ENCODE measurements at regions of chr18 and their contacts with region 1.

Region 1: DNA sequence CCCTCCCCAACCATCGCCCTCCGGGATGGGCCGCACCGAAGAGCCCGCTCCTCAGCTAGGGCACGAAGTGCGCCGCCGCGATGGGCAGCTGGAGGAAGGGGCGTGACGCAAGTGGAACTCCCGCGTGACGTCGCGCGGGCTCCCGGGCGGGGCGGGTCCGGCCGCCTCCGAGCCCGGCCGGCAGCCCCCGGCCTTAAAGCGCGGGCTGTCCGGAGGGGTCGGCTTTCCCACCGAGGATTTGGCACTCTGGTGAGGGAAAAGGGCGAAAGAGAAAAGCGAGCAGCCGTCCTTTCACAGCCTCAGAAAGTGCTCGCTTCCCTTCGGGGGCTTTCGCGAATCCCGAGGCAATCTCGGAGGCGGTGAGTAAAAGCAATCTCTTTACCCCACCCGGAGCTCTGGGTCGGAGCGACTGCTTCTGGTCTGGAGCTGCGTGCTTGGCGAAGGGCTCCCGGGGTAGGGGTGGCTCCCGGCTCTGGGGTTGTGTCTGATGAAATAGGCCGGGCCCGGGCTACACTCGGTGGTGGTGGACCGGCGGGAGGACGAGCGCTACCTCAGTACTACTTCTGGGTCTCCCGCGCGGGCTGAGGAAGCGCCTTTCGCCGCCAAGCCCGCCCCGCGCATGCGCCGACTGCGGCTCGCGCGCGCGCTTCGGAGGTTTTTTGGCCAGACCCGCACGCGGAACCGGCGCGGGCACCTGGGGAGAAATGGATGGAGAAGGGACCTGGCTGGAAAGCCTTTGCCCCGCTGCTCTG is at the start of gene RBBP8:
- DNase-seq: peak; percentile 87 to 90
- H3K4me3 ChIP-seq: peak within 1 kb of the TSS; percentile 51
- H3K4me3 Mint-ChIP-seq: peak within 1 kb of the TSS; percentile 92
- H3K27ac Mint-ChIP-seq: peak within 1 kb of the TSS; percentile 91
- H3K4me1 ChIP-seq: peaks cover 11% of the 10 kb centered on the region; the same call in 1 of the 2 replicates
- H3K4me1 Mint-ChIP-seq: peaks cover 17% of the 10 kb centered on the region
- H3K27me3 ChIP-seq: no peaks in the 10 kb centered on the region
- H3K27me3 Mint-ChIP-seq: no peaks in the 10 kb centered on the region
- CTCF ChIP-seq: no peak
- total RNA-seq, gene RBBP8: 44.4 and 46.7 TPM in 2 replicates

Region 2: DNA sequence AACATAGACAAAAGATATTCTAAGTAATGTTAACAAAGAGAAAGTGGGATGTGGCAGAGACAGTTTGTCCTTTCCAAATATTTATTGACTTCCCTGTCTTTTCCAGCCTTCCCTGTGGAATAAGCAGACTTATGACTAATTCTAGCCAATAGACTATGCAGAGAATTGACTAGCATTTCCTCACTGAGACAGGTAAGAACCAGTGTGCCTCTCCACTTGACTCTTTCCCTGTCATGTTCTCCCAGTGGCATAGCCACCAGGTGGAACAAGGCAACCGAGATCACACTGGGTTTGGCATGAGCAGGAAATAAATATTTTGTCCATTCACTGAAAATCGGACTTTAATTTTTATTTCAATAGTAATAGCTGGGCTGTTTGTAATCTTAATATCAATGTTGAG is 347.6 kb before region 1 on chr18:
- CTCF ChIA-PET with region 1: no interaction called
- POLR2A ChIA-PET with region 1: no interaction called
- intact Hi-C with region 1: no loop called
- DNase-seq: no peak
- H3K4me3 ChIP-seq: no peak overlapping the region
- H3K4me3 Mint-ChIP-seq: no peak overlapping the region
- H3K27ac Mint-ChIP-seq: no peak overlapping the region
- H3K4me1 ChIP-seq: no peaks in the 10 kb centered on the region
- H3K4me1 Mint-ChIP-seq: peaks cover 9% of the 10 kb centered on the region
- H3K27me3 ChIP-seq: no peaks in the 10 kb centered on the region
- H3K27me3 Mint-ChIP-seq: peaks cover 11% of the 10 kb centered on the region
- CTCF ChIP-seq: no peak

Region 3: DNA sequence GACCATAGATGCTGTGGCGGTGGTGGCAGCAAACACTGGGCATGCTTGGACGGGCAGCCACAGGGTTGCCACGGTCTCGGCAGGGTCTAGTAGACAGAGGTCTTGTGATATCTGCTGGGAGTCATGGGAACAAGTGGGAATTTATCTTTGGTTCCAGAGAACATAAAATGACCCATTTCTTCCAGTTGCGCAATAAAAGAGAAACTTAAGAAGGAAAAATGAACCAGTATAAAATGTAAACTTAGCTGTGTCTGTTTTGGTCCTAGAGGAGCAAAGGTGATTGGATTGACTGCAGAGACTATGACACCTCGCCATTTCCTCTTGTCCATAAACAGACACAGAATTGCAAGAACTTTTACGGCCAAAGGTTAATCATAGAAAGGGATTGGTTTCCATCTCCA is 132.8 kb before region 1 on chr18:
- CTCF ChIA-PET with region 1: no interaction called
- POLR2A ChIA-PET with region 1: no interaction called
- intact Hi-C with region 1: loop called (anchors 5 kb)
- DNase-seq: no peak
- H3K4me3 ChIP-seq: no peak overlapping the region
- H3K4me3 Mint-ChIP-seq: no peak overlapping the region
- H3K27ac Mint-ChIP-seq: no peak overlapping the region
- H3K4me1 ChIP-seq: no peaks in the 10 kb centered on the region
- H3K4me1 Mint-ChIP-seq: no peaks in the 10 kb centered on the region
- H3K27me3 ChIP-seq: no peaks in the 10 kb centered on the region
- H3K27me3 Mint-ChIP-seq: no peaks in the 10 kb centered on the region
- CTCF ChIP-seq: no peak

Region 4: GRCh38 chr18:22813648-22814328 is 119.6 kb before region 1 on chr18:
- CTCF ChIA-PET with region 1: interaction called, 4 read pairs
- POLR2A ChIA-PET with region 1: interaction called, 3 read pairs
- intact Hi-C with region 1: loop called (anchors 1 kb)
- DNase-seq: peak in 1 of 2 experiments; percentile 56
- H3K4me3 ChIP-seq: no peak overlapping the region
- H3K4me3 Mint-ChIP-seq: no peak overlapping the region
- H3K27ac Mint-ChIP-seq: no peak overlapping the region
- H3K4me1 ChIP-seq: peaks cover 25% of the 10 kb centered on the region
- H3K4me1 Mint-ChIP-seq: peaks cover 6% of the 10 kb centered on the region
- H3K27me3 ChIP-seq: no peaks in the 10 kb centered on the region
- H3K27me3 Mint-ChIP-seq: no peaks in the 10 kb centered on the region
- CTCF ChIP-seq: peak; percentile 58 to 65

Region 5: GRCh38 chr18:22828171-22828570 is 105.2 kb before region 1 on chr18:
- CTCF ChIA-PET with region 1: no interaction called
- POLR2A ChIA-PET with region 1: no interaction called
- intact Hi-C with region 1: no loop called
- DNase-seq: no peak
- H3K4me3 ChIP-seq: no peak overlapping the region
- H3K4me3 Mint-ChIP-seq: no peak overlapping the region
- H3K27ac Mint-ChIP-seq: no peak overlapping the region
- H3K4me1 ChIP-seq: peaks cover 51% of the 10 kb centered on the region
- H3K4me1 Mint-ChIP-seq: peaks cover 19% of the 10 kb centered on the region
- H3K27me3 ChIP-seq: no peaks in the 10 kb centered on the region
- H3K27me3 Mint-ChIP-seq: no peaks in the 10 kb centered on the region
- CTCF ChIP-seq: no peak

Region 6: DNA sequence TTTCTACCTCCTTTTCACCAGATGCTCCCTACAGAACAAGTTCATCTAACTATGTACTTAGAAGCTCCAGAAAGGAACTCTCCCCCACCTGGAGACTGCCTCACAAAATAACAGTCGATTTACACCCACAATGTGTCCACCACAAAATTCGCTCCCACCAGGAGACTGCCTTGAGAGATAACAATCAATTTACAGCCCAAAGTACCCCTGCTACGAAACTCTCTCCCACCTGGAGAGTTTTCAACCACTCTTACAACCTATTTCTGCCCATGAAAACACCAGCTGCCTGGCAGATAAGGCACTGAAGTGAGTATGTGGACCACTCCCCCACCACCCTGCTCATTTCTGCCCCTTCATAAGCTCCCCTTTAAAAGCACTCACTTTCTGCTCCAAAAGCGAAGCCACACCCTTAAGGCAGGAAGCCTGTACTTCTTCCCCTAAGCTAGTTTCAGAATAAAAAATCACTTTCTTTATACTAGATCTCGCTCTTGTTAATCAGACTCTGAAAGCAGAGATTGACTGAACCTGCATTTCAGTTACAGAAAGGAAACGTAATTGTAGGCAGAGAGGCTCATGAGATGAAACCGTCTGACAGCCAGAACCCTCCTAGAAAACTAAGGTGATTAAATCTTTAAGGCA is 94.6 kb before region 1 on chr18:
- CTCF ChIA-PET with region 1: no interaction called
- POLR2A ChIA-PET with region 1: interaction called, 9 read pairs
- intact Hi-C with region 1: loop called (anchors 2 kb)
- DNase-seq: no peak
- H3K4me3 ChIP-seq: no peak overlapping the region
- H3K4me3 Mint-ChIP-seq: no peak overlapping the region
- H3K27ac Mint-ChIP-seq: no peak overlapping the region
- H3K4me1 ChIP-seq: peaks cover 68% of the 10 kb centered on the region
- H3K4me1 Mint-ChIP-seq: peaks cover 21% of the 10 kb centered on the region
- H3K27me3 ChIP-seq: no peaks in the 10 kb centered on the region
- H3K27me3 Mint-ChIP-seq: no peaks in the 10 kb centered on the region
- CTCF ChIP-seq: no peak

Region 7: DNA sequence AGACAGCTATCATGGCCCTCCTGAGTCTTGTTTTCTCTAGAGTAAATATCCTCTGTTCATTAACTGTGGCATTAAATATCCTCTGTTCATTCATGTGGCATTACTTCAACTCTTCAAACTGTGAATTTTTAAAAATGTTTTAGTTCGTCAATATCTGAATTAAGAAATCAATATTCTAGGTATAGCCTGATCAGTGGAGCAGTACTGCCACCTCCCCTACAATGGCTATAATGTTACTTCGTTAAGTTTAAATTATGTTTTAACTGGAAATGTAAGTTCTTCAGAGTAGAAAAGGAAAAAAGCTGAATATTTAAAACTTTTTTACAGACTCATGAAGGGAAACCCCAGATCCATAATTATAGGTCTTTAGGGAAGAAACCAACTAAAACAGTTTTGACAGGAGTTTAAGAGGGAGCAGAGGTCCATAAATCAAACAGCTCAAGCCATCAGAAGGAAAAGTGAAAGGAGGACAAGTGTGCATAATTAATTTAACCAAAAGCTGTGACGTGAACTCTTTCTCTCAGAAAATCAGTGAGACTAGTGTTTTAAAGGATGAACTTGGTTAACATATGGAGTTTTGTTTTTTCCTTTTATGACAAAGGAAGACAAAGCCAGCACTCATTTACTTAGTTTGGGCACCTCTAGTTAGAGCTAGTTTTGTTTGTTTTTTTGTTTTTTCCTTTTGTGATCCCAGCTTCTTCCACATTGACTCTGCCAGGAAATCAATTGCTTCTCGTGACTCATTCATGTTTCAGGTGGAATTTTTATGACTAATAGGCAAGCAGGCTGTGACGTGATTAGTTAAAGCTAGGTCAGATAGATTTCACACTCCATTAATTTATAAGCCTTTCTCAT is 44.7 kb after region 1 on chr18:
- CTCF ChIA-PET with region 1: interaction called, 12 read pairs
- POLR2A ChIA-PET with region 1: interaction called, 3 read pairs
- intact Hi-C with region 1: loop called (anchors 5 kb)
- DNase-seq: no peak
- H3K4me3 ChIP-seq: no peak overlapping the region
- H3K4me3 Mint-ChIP-seq: no peak overlapping the region
- H3K27ac Mint-ChIP-seq: no peak overlapping the region
- H3K4me1 ChIP-seq: no peaks in the 10 kb centered on the region
- H3K4me1 Mint-ChIP-seq: peaks cover 12% of the 10 kb centered on the region
- H3K27me3 ChIP-seq: no peaks in the 10 kb centered on the region
- H3K27me3 Mint-ChIP-seq: no peaks in the 10 kb centered on the region
- CTCF ChIP-seq: no peak

Region 8: DNA sequence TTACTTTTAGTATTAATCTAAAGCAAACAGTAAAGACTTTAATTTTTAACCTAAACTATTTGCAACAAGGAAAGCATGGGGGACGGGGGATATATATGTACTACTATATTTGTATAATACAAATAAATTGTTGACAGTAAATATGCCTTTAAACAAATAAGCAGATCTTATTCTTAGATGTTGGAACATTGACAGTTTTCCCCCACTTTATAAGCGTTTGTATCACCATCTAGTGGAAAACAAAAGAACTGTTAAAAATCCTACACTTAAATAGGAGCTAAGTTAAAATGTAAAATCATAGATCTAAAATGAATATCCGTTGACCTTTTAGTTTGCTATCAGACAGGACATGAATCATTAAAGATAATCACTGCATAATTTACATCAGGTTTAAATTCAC is 49.8 kb after region 1 on chr18:
- CTCF ChIA-PET with region 1: interaction called, 12 read pairs
- POLR2A ChIA-PET with region 1: no interaction called
- intact Hi-C with region 1: loop called (anchors 5 kb)
- DNase-seq: no peak
- H3K4me3 ChIP-seq: no peak overlapping the region
- H3K4me3 Mint-ChIP-seq: no peak overlapping the region
- H3K27ac Mint-ChIP-seq: no peak overlapping the region
- H3K4me1 ChIP-seq: no peaks in the 10 kb centered on the region
- H3K4me1 Mint-ChIP-seq: peaks cover 6% of the 10 kb centered on the region
- H3K27me3 ChIP-seq: no peaks in the 10 kb centered on the region
- H3K27me3 Mint-ChIP-seq: no peaks in the 10 kb centered on the region
- CTCF ChIP-seq: peak; percentile 30 to 43